ENCODE measurements at regions of chr7 and their contacts with region 1.

Region 1: DNA sequence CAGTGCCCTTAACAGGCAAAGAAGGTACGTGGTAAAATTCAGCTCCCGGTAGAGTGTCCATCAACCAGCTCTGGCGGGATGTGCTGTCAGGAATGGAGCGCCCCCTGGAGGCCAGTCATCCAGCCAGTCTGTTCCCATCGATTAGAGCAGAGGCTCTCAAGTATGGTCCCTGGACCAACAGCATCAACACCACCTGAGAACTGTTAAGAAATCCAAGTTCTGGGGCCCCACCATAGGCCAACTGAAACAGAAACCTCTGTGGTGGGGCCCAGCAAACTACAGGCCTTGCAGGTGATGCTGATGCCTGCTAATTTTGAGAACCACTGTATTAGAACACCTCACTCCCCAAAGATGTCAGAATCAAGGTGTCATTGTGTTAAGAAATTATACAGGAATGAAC is 109.2 kb downstream of the DPY19L1 start:
- DNase-seq: peak; percentile 17 to 64 (median 28)
- ATAC-seq: peak; percentile 94
- H3K4me3 ChIP-seq: no peak overlapping the region
- H3K27ac ChIP-seq: no peak overlapping the region
- H3K4me1 ChIP-seq: no peaks in the 10 kb centered on the region
- H3K27me3 ChIP-seq: no peaks in the 10 kb centered on the region
- CTCF ChIP-seq: peak; percentile 58 to 68 (median 60)
- EP300 ChIP-seq: no peak
- POLR2A ChIP-seq: no peak
- RAD21 ChIP-seq: no peak; a peak in 1 of 4 replicates

Region 2: DNA sequence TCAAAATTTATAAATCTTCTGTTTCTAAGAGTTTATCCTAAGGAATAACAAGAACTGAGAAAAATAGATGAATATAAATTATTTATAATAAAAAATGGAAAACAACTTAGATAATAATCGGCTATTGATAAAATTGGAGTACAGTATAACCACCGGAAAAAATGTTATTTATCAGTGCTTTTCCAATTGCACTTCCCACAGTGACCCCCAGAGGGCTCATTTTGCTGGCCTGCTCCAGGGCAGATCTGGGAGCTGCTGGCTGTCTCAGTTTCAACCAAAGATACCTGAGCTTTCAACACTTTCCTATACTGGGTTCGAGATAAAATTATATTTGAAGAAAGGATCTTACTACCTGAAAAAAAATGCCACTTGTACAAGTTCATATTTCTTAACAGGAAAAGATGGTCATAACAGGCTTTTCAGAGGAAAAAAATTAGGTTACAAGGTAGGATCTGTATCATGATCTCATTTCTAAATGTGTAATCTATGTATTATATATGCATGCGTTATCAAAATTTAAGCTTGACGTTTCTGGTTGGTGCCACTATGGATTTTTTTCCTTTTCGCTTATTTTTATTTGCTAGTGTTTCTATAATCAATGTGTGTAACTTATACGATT is 104.3 kb before region 1 on chr7:
- CTCF ChIA-PET with region 1: interaction called, 3 read pairs
- POLR2A ChIA-PET with region 1: no interaction called
- in situ Hi-C with region 1: no loop called
- intact Hi-C with region 1: loop called (anchors 5 kb)
- DNase-seq: peak; percentile 62 to 71 (median 65)
- ATAC-seq: peak; percentile 87
- H3K4me3 ChIP-seq: no peak overlapping the region
- H3K27ac ChIP-seq: no peak overlapping the region
- H3K4me1 ChIP-seq: no peaks in the 10 kb centered on the region
- H3K27me3 ChIP-seq: no peaks in the 10 kb centered on the region; a peak in 1 of 5 replicates
- CTCF ChIP-seq: peak; percentile 73 to 83 (median 74)
- EP300 ChIP-seq: no peak
- POLR2A ChIP-seq: no peak
- RAD21 ChIP-seq: peak; percentile 69 to 72